ENCODE measurements at regions of chr13 and their contacts with region 1.

Region 1: DNA sequence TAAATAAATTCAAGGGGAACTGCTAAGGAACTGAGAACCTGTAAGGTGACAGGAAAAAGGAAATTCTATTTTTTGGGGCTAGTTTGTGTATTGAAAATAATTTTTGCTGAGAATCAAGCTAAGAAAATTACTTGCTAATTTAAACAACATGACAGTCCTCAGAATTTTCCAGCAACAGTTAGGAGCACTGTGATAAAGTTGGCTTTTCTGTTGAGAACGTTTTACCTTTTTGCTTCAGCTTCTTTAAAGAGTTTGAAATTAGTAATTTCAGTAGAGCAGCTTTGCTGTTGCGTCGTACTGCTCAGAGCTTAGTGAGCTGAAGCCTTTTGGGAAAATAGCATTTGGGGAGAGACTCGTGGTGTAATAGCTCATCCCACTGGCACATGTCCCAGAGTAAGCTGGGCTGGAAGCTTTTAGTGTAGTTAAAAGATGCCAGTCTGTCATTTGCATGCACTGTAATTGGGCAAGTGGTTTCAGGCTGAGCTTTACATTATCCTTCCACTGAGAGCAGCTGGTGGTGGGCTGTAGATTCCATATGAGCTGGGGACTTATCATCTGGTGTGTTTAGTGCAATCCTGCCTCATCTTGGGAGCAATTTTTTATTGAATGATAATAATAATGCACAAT is 69.8 kb downstream of the LRCH1 start:
- DNase-seq: no peak
- ATAC-seq: no peak
- H3K4me3 ChIP-seq: no peak overlapping the region
- H3K4me3 Mint-ChIP-seq: peak overlapping the region; percentile 35
- H3K27ac ChIP-seq: no peak overlapping the region
- H3K27ac Mint-ChIP-seq: no peak overlapping the region
- H3K4me1 ChIP-seq: peaks cover 74 to 75% of the 10 kb centered on the region in 2 donors
- H3K4me1 Mint-ChIP-seq: peaks cover 92% of the 10 kb centered on the region
- H3K27me3 ChIP-seq: no peaks in the 10 kb centered on the region
- H3K27me3 Mint-ChIP-seq: no peaks in the 10 kb centered on the region
- CTCF ChIP-seq: no peak

Region 2: GRCh38 chr13:44826591-44827350 is 1796.0 kb before region 1 on chr13:
- CTCF ChIA-PET with region 1: no interaction called
- POLR2A ChIA-PET with region 1: no interaction called
- intact Hi-C with region 1: no loop called
- DNase-seq: no peak
- ATAC-seq: no peak
- H3K4me3 ChIP-seq: no peak overlapping the region
- H3K4me3 Mint-ChIP-seq: no peak overlapping the region
- H3K27ac ChIP-seq: no peak overlapping the region
- H3K27ac Mint-ChIP-seq: no peak overlapping the region
- H3K4me1 ChIP-seq: no peaks in the 10 kb centered on the region
- H3K4me1 Mint-ChIP-seq: no peaks in the 10 kb centered on the region
- H3K27me3 ChIP-seq: peaks cover 0 to 2% (median 0%) of the 10 kb centered on the region in 4 experiments
- H3K27me3 Mint-ChIP-seq: no peaks in the 10 kb centered on the region
- CTCF ChIP-seq: no peak

Region 3: GRCh38 chr13:46530084-46530935 is 92.4 kb before region 1 on chr13:
- CTCF ChIA-PET with region 1: no interaction called
- POLR2A ChIA-PET with region 1: no interaction called
- intact Hi-C with region 1: no loop called
- DNase-seq: no peak
- ATAC-seq: no peak
- H3K4me3 ChIP-seq: no peak overlapping the region
- H3K4me3 Mint-ChIP-seq: no peak overlapping the region
- H3K27ac ChIP-seq: no peak overlapping the region
- H3K27ac Mint-ChIP-seq: no peak overlapping the region
- H3K4me1 ChIP-seq: no peaks in the 10 kb centered on the region
- H3K4me1 Mint-ChIP-seq: no peaks in the 10 kb centered on the region
- H3K27me3 ChIP-seq: no peaks in the 10 kb centered on the region
- H3K27me3 Mint-ChIP-seq: peaks cover 10% of the 10 kb centered on the region
- CTCF ChIP-seq: no peak

Region 4: DNA sequence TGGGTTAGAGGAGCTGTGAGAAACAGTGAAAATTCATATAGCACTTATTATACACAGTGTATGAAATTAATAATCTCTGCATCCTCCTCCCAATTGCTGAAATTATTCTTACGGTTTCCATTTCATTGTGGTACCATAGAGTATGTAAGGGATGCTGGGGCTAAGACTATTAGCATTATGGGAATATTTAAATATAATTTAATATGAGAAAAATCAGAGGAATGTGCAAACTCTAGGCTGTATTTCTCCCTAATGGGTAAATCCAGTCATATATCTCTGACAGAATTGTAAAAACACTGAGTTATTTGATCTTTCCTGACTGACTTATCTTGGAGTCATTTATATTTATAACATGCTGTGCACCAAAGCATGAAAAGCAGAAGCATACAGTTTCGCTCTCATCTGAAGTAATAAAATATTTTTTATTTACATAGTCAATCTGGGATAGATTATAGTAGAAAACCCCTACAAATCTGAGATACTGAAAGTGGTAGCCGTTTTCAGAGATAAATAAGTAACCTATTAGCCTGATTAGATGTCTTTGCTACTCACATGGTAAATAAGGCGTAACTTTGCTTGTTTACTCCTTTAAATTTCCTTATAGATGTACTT is 34.8 kb before region 1 on chr13:
- CTCF ChIA-PET with region 1: interaction called, 3 read pairs
- POLR2A ChIA-PET with region 1: no interaction called
- intact Hi-C with region 1: loop called (anchors 5 kb)
- DNase-seq: peak; percentile 59
- ATAC-seq: peak; percentile 68
- H3K4me3 ChIP-seq: peak overlapping the region; percentile 18 to 55 (median 30)
- H3K4me3 Mint-ChIP-seq: peak overlapping the region; percentile 68
- H3K27ac ChIP-seq: peak overlapping the region; percentile 49 to 78
- H3K27ac Mint-ChIP-seq: peak overlapping the region; percentile 80
- H3K4me1 ChIP-seq: peaks cover 81 to 87% of the 10 kb centered on the region in 2 donors
- H3K4me1 Mint-ChIP-seq: peaks cover 90% of the 10 kb centered on the region
- H3K27me3 ChIP-seq: no peaks in the 10 kb centered on the region
- H3K27me3 Mint-ChIP-seq: no peaks in the 10 kb centered on the region
- CTCF ChIP-seq: no peak

Measured in B cell (primary cell).